ENCODE measurements at regions of chr3 and their contacts with region 1.

Region 1: GRCh38 chr3:36540888-36541518 is 160.7 kb downstream of the STAC start:
- DNase-seq: peak; percentile 34
- H3K4me3 Mint-ChIP-seq: no peak overlapping the region
- H3K27ac Mint-ChIP-seq: no peak overlapping the region
- H3K4me1 Mint-ChIP-seq: no peaks in the 10 kb centered on the region
- H3K27me3 Mint-ChIP-seq: no peaks in the 10 kb centered on the region
- CTCF ChIP-seq: peak; percentile 53

Region 2: DNA sequence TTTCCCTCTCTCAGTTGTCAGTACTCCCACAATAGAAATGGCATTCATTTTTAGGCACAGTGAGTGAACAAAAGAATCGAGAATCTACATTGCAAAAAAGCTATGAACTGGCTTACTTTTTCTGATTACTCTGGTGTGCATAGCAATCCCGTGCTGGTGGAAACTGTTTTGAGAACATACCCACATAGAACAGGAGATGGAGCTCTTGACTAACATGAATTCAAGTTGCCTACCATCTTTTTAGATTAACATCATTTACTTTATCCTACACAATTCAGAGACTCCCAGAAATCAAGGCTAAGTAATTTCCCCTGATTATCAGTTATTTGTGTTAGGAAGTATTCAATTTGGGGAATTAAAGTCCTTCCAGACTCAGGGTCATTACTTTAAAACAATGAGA is 575.1 kb before region 1 on chr3:
- CTCF ChIA-PET with region 1: interaction called, 6 read pairs
- intact Hi-C with region 1: loop called (anchors 5 kb)
- DNase-seq: peak; percentile 7
- H3K4me3 Mint-ChIP-seq: no peak overlapping the region
- H3K27ac Mint-ChIP-seq: no peak overlapping the region
- H3K4me1 Mint-ChIP-seq: no peaks in the 10 kb centered on the region
- H3K27me3 Mint-ChIP-seq: no peaks in the 10 kb centered on the region
- CTCF ChIP-seq: no peak

Region 3: GRCh38 chr3:36124118-36124796 is 416.7 kb before region 1 on chr3:
- CTCF ChIA-PET with region 1: interaction called, 11 read pairs
- intact Hi-C with region 1: loop called (anchors 1 kb)
- DNase-seq: peak; percentile 64
- H3K4me3 Mint-ChIP-seq: no peak overlapping the region
- H3K27ac Mint-ChIP-seq: no peak overlapping the region
- H3K4me1 Mint-ChIP-seq: peaks cover 6% of the 10 kb centered on the region
- H3K27me3 Mint-ChIP-seq: no peaks in the 10 kb centered on the region
- CTCF ChIP-seq: peak; percentile 53

Region 4: DNA sequence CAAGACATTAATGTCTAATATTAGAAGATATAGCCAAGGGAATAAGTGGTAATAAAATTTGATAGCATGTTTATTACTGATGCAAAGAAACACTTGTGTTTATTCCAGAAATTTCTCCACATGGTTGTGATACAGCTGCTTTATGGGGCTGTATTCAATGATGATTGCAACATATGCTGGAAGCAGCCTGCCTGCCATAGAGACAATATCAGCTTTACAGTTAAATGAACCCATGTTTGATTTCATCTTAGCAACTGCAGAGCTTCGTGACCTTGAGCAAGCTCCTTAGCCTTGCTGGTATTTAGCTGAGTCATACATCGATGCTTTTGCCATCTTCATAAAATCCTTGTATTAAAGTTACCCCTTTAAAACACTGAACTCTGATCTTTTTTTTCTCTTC is 328.8 kb before region 1 on chr3:
- CTCF ChIA-PET with region 1: no interaction called
- intact Hi-C with region 1: loop called (anchors 2 kb)
- DNase-seq: no peak
- H3K4me3 Mint-ChIP-seq: no peak overlapping the region
- H3K27ac Mint-ChIP-seq: no peak overlapping the region
- H3K4me1 Mint-ChIP-seq: no peaks in the 10 kb centered on the region
- H3K27me3 Mint-ChIP-seq: no peaks in the 10 kb centered on the region
- CTCF ChIP-seq: no peak

Region 5: GRCh38 chr3:36480911-36481648 is 59.9 kb before region 1 on chr3:
- CTCF ChIA-PET with region 1: no interaction called
- intact Hi-C with region 1: no loop called
- DNase-seq: no peak
- H3K4me3 Mint-ChIP-seq: no peak overlapping the region
- H3K27ac Mint-ChIP-seq: no peak overlapping the region
- H3K4me1 Mint-ChIP-seq: peaks cover 6% of the 10 kb centered on the region
- H3K27me3 Mint-ChIP-seq: no peaks in the 10 kb centered on the region
- CTCF ChIP-seq: no peak

Region 6: DNA sequence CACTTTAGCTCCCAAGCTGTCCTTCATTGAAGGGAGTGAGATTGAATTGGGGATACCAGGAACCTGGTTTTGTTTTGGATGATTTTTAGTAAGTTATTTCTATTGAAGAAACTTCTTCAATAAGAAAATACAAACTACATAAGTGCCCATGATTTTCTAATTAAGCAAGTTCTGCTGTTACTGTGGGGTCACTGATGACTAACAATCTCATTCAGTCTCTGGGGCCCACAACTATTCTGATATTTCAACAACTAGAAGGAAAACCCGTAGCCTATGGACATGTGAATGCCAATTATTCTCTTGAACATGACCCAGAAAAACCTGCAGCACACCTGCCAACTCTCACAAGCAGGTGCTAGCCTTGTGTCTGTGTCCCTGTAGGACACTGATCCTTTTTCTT is 38.7 kb after region 1 on chr3:
- CTCF ChIA-PET with region 1: no interaction called
- intact Hi-C with region 1: no loop called
- DNase-seq: no peak
- H3K4me3 Mint-ChIP-seq: no peak overlapping the region
- H3K27ac Mint-ChIP-seq: no peak overlapping the region
- H3K4me1 Mint-ChIP-seq: no peaks in the 10 kb centered on the region
- H3K27me3 Mint-ChIP-seq: no peaks in the 10 kb centered on the region
- CTCF ChIP-seq: no peak